Vagina (tissue), 2 donors: ENCODE measurements at regions of chr16 and their contacts with region 1.

Region 1: GRCh38 chr16:61946019-61946418 is 90.2 kb downstream of the CDH8 start:
- DNase-seq: no peak
- H3K4me3 ChIP-seq: no peak overlapping the region
- H3K27ac ChIP-seq: no peak overlapping the region
- H3K4me1 ChIP-seq: no peaks in the 10 kb centered on the region
- H3K27me3 ChIP-seq: no peaks in the 10 kb centered on the region
- CTCF ChIP-seq: no peak
- POLR2A ChIP-seq: no peak

Region 2: GRCh38 chr16:61432421-61432820 is 513.6 kb before region 1 on chr16:
- intact Hi-C with region 1: loop called (anchors 10 kb)
- DNase-seq: no peak
- H3K4me3 ChIP-seq: no peak overlapping the region
- H3K27ac ChIP-seq: no peak overlapping the region
- H3K4me1 ChIP-seq: no peaks in the 10 kb centered on the region
- H3K27me3 ChIP-seq: no peaks in the 10 kb centered on the region
- CTCF ChIP-seq: no peak
- POLR2A ChIP-seq: no peak

Region 3: GRCh38 chr16:63806794-63807506 is 1860.9 kb after region 1 on chr16:
- intact Hi-C with region 1: no loop called
- DNase-seq: no peak
- H3K4me3 ChIP-seq: no peak overlapping the region
- H3K27ac ChIP-seq: no peak overlapping the region
- H3K4me1 ChIP-seq: no peaks in the 10 kb centered on the region
- H3K27me3 ChIP-seq: no peaks in the 10 kb centered on the region
- CTCF ChIP-seq: no peak
- POLR2A ChIP-seq: no peak